Heart right ventricle (tissue), 16 donors: ENCODE measurements at regions of chr16 and their contacts with region 1.

Region 1: GRCh38 chr16:15427648-15428239 is 6.6 kb upstream of the BMERB1 start:
- DNase-seq: peak; percentile 73 to 77
- ATAC-seq: peak; percentile 87 to 94 (median 90)
- H3K4me3 ChIP-seq: peak overlapping the region in 3 of 10 donors; percentile 10 to 39 (median 25)
- H3K27ac ChIP-seq: peak overlapping the region in 5 of 10 donors; percentile 23 to 60 (median 44)
- H3K4me1 ChIP-seq: peaks cover 0 to 11% (median 4%) of the 10 kb centered on the region in 9 donors
- H3K27me3 ChIP-seq: no peaks in the 10 kb centered on the region
- CTCF ChIP-seq: peak; percentile 37 to 82 (median 66)

Region 2: GRCh38 chr16:14586637-14587305 is 841.0 kb before region 1 on chr16:
- intact Hi-C with region 1: no loop called
- DNase-seq: no peak
- ATAC-seq: no peak
- H3K4me3 ChIP-seq: no peak overlapping the region
- H3K27ac ChIP-seq: no peak overlapping the region
- H3K4me1 ChIP-seq: no peaks in the 10 kb centered on the region
- H3K27me3 ChIP-seq: no peaks in the 10 kb centered on the region
- CTCF ChIP-seq: no peak

Region 3: DNA sequence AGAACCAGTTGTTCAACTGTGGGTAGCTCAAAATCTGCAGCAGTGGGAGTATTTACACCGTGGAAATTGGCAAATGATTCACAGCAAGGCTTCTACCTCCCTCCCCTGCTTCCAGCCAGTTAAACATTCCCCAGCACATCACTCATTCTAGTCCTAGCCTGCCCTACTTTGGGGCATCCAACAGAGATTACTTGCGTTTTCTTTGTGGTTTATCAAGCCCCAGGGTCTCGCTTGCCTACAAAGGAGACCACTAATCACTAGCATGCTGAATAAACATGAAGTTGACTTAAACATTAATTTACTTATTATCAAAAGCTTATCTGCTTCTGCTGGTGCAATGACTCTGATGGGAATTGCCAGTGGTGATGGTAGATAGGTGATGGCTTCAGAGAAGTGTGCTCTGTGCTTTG is 120.7 kb after region 1 on chr16:
- intact Hi-C with region 1: loop called in 7 of 10 experiments (anchors 2 to 10 kb)
- DNase-seq: no peak
- ATAC-seq: no peak
- H3K4me3 ChIP-seq: no peak overlapping the region
- H3K27ac ChIP-seq: no peak overlapping the region
- H3K4me1 ChIP-seq: peaks cover 0 to 11% (median 0%) of the 10 kb centered on the region in 9 donors
- H3K27me3 ChIP-seq: no peaks in the 10 kb centered on the region
- CTCF ChIP-seq: no peak

Region 4: GRCh38 chr16:15553313-15554088 is 125.8 kb after region 1 on chr16:
- intact Hi-C with region 1: loop called in 7 of 10 experiments (anchors 2 to 10 kb)
- DNase-seq: no peak
- ATAC-seq: no peak
- H3K4me3 ChIP-seq: no peak overlapping the region
- H3K27ac ChIP-seq: no peak overlapping the region
- H3K4me1 ChIP-seq: peaks cover 0 to 11% (median 0%) of the 10 kb centered on the region in 9 donors
- H3K27me3 ChIP-seq: no peaks in the 10 kb centered on the region
- CTCF ChIP-seq: no peak

Region 5: DNA sequence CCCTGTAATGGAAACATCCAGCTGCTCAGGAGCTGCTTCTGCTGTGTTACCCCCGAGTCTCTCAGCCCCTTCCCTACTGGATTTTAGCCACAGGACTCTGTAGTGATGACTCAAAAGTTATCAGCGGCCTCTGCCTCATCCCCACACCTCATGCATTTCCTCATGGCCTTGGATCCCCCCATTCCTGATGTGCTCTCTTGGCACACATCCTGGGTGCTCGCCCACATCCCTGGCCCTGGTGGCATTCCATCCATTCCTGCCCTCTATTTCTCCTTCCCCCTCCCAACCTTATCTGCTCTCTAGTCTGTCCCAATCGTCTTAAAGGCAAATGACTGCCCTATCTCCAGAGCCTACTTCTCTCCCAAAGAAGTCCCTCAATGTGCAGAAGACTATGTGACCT is 190.6 kb after region 1 on chr16:
- intact Hi-C with region 1: loop called in 3 of 10 experiments (anchors 5 to 10 kb)
- DNase-seq: no peak
- ATAC-seq: peak in 3 of 8 donors; percentile 11 to 22 (median 18)
- H3K4me3 ChIP-seq: no peak overlapping the region
- H3K27ac ChIP-seq: peak overlapping the region in 2 of 10 donors; percentile 16 to 30
- H3K4me1 ChIP-seq: peaks cover 0 to 27% (median 20%) of the 10 kb centered on the region in 9 donors
- H3K27me3 ChIP-seq: no peaks in the 10 kb centered on the region
- CTCF ChIP-seq: no peak

Region 6: DNA sequence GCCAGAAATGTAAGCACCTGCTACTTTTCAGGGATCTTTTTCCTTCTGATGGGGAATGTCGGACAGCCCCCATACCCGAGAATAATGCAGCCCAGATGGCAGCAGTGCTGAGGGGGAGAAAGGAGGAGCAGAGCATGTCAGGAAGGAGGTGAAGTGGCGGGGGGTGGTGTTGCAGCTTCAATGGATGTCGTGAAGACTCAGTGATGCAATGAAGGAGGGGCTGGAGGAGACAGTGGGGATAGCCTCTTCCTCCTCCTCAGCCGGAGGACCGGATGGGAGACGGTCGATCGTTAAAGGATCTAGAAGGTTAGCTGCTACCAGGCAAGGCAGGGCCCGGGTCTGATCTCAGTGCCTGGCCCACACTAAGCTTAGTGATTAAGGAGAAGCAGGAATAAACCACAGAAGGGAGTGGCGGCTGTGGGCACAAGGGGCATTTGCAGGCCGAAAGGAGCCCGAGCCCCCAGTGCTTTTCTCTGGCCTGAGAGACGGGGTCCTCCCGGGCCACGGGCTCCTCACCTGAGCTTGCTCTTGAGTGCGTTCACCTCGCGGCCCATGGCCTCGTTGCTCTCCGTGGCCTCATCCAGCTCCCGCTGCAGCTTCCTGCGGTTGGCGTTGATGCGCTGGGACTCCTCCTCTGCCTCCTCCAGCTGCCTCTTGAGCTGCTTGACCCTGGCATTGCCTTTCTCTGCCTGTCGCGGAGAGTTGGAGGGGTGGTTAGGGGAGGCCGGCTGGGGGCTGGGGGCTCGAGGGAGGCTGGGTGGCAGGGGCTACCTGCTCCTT is 286.8 kb after region 1 on chr16:
- intact Hi-C with region 1: loop called in 5 of 10 experiments (anchors 5 to 10 kb)
- DNase-seq: no peak
- ATAC-seq: no peak
- H3K4me3 ChIP-seq: no peak overlapping the region
- H3K27ac ChIP-seq: no peak overlapping the region
- H3K4me1 ChIP-seq: no peaks in the 10 kb centered on the region
- H3K27me3 ChIP-seq: no peaks in the 10 kb centered on the region
- CTCF ChIP-seq: no peak